GM12878 (cell line): ENCODE measurements at regions of chr12 and their contacts with region 1.

Region 1: GRCh38 chr12:103936679-103937078 is 6.5 kb downstream of the HSP90B1 start:
- DNase-seq: no peak
- ATAC-seq: peak; percentile 10
- H3K4me3 ChIP-seq: peak overlapping the region; percentile 39; the same call in 1 of the 2 replicates
- H3K27ac ChIP-seq: no peak overlapping the region
- H3K4me1 ChIP-seq: peaks cover 7% of the 10 kb centered on the region; the same call in 1 of the 2 replicates
- H3K27me3 ChIP-seq: no peaks in the 10 kb centered on the region
- CTCF ChIP-seq: no peak
- EP300 ChIP-seq: no peak
- POLR2A ChIP-seq: no peak
- RAD21 ChIP-seq: no peak

Region 2: GRCh38 chr12:103924761-103925641 is 11.7 kb before region 1 on chr12:
- CTCF ChIA-PET with region 1: interaction called, 15 read pairs
- POLR2A ChIA-PET with region 1: interaction called, 10 read pairs
- RAD21 ChIA-PET with region 1: interaction called, 13 read pairs
- SMC1A ChIA-PET with region 1: interaction called, 15 read pairs
- in situ Hi-C with region 1: no loop called
- intact Hi-C with region 1: no loop called
- DNase-seq: peak; percentile 96
- ATAC-seq: peak; percentile 60
- H3K4me3 ChIP-seq: peak overlapping the region; percentile 56
- H3K27ac ChIP-seq: peak overlapping the region; percentile 74
- H3K4me1 ChIP-seq: peaks cover 24% of the 10 kb centered on the region
- H3K27me3 ChIP-seq: no peaks in the 10 kb centered on the region
- CTCF ChIP-seq: no peak
- EP300 ChIP-seq: peak; percentile 71 to 77; a peak in 2 of 4 replicates
- POLR2A ChIP-seq: peak; percentile 92
- RAD21 ChIP-seq: 0 out of 2 replicates have a peak, but pooled peaks have one; percentile 15

Region 3: DNA sequence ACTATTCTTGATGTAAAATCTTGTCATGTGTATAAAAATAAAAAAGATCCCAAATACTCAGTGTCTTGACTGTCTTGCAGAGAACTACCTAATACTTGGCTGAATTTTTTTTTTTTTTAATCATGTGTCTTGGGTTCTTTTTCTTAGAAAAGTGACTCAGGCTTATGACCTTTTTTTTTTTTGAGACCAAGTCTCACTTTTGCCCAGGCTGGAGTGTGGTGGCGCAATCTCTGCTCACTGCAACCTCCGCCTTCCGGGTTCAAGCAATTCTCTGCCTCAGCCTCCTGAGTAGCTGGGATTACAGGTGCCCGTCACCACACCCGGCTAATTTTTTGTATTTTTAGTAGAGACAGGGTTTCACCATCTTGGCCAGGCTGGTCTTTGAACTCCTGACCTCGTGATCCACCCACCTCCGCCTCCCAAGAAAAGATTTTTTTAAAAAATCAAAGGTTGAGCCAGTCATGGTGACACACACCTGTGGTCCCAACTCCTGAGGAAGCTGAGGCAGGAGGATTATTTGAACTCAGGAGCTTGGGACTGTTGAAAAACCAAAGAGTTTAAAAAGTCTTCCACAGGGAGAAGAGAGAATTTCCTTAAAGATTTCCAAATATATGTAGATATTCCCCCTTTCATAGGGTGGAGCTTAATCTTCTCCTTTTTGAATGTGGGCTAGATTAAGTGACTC is 11.3 kb after region 1 on chr12:
- CTCF ChIA-PET with region 1: interaction called, 17 read pairs
- POLR2A ChIA-PET with region 1: interaction called, 15 read pairs
- RAD21 ChIA-PET with region 1: interaction called, 5 read pairs
- SMC1A ChIA-PET with region 1: interaction called, 38 read pairs
- in situ Hi-C with region 1: no loop called
- intact Hi-C with region 1: loop called (anchors 2 kb)
- DNase-seq: no peak
- ATAC-seq: no peak
- H3K4me3 ChIP-seq: no peak overlapping the region
- H3K27ac ChIP-seq: no peak overlapping the region
- H3K4me1 ChIP-seq: peaks cover 8% of the 10 kb centered on the region
- H3K27me3 ChIP-seq: no peaks in the 10 kb centered on the region
- CTCF ChIP-seq: no peak
- EP300 ChIP-seq: no peak
- POLR2A ChIP-seq: no peak
- RAD21 ChIP-seq: no peak

Region 4: GRCh38 chr12:103956516-103957027 is 19.9 kb after region 1 on chr12:
- CTCF ChIA-PET with region 1: interaction called, 17 read pairs
- POLR2A ChIA-PET with region 1: interaction called, 15 read pairs
- RAD21 ChIA-PET with region 1: interaction called, 5 read pairs
- SMC1A ChIA-PET with region 1: interaction called, 38 read pairs
- in situ Hi-C with region 1: no loop called
- intact Hi-C with region 1: loop called (anchors 2 kb)
- DNase-seq: no peak
- ATAC-seq: peak; percentile 31
- H3K4me3 ChIP-seq: peak overlapping the region; percentile 80
- H3K27ac ChIP-seq: peak overlapping the region; percentile 77
- H3K4me1 ChIP-seq: peaks cover 8% of the 10 kb centered on the region
- H3K27me3 ChIP-seq: no peaks in the 10 kb centered on the region
- CTCF ChIP-seq: no peak
- EP300 ChIP-seq: no peak
- POLR2A ChIP-seq: no peak
- RAD21 ChIP-seq: no peak

Region 5: GRCh38 chr12:103965590-103966504 is 29.2 kb after region 1 on chr12 and contains the start of gene TDG:
- CTCF ChIA-PET with region 1: interaction called, 6 read pairs
- POLR2A ChIA-PET with region 1: interaction called, 10 read pairs
- RAD21 ChIA-PET with region 1: interaction called, 7 read pairs
- SMC1A ChIA-PET with region 1: interaction called, 25 read pairs
- in situ Hi-C with region 1: no loop called
- intact Hi-C with region 1: loop called (anchors 2 kb)
- DNase-seq: peak; percentile 97
- ATAC-seq: peak; percentile 96
- H3K4me3 ChIP-seq: peak within 1 kb of the TSS; percentile 92
- H3K27ac ChIP-seq: peak within 1 kb of the TSS; percentile 94
- H3K4me1 ChIP-seq: peaks cover 10% of the 10 kb centered on the region
- H3K27me3 ChIP-seq: no peaks in the 10 kb centered on the region
- CTCF ChIP-seq: peak in 1 of 3 experiments; percentile 23; a peak in 1 of 6 replicates
- EP300 ChIP-seq: no peak
- POLR2A ChIP-seq: peak; percentile 96
- RAD21 ChIP-seq: no peak
- polyA plus RNA-seq, gene TDG: 29.7 to 33.7 TPM